ENCODE measurements at regions of chr1 and their contacts with region 1.

Region 1: DNA sequence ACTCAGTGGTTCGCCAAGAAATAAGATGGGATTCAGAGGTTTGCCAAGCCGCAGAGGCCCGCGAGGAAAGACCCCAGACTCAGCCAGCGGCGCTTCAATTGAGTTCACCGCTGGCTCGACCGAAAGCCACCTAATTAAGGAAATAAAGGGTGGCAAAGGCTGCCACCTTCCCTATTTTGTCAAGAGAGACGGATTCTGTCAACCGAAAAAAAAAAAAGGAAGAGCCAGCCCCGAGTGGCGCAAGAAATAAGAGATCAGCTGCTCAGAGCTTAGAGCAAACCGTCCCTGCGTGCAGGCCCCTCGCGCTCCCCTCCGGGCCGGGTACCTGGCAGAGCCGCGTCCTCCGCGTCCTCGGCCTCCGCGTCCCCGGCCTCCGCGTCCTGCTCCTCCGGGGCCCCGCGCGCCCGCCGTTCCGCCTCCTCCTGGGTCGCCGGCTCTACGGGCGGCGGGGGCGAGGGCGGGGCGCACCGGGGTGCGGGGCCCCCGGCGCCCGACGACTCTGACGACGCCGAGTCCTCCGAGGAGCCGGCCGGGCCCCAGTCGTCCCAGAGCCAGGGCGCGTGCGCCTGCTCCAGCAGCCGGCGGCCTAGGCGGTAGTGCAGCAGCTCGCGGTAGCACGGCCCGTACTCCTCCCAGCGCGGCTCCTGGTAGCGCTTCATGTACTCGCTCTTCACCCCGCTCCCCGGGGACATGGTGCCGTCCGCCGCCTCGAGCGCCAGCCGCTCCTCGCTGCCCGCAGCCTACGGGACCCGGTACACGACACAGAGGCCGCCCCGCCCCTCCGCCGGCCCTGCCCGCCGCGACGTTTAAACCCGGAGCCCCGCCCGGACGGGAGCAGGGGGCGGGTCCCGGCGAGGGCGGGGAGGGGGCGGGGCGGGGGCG is 832 bp downstream of the CCSAP start:
- DNase-seq: peak; percentile 82
- H3K4me3 Mint-ChIP-seq: peak overlapping the region; percentile 89
- H3K27ac Mint-ChIP-seq: peak overlapping the region; percentile 87
- H3K4me1 Mint-ChIP-seq: peaks cover 50% of the 10 kb centered on the region
- H3K27me3 Mint-ChIP-seq: peaks cover 21% of the 10 kb centered on the region

Region 2: DNA sequence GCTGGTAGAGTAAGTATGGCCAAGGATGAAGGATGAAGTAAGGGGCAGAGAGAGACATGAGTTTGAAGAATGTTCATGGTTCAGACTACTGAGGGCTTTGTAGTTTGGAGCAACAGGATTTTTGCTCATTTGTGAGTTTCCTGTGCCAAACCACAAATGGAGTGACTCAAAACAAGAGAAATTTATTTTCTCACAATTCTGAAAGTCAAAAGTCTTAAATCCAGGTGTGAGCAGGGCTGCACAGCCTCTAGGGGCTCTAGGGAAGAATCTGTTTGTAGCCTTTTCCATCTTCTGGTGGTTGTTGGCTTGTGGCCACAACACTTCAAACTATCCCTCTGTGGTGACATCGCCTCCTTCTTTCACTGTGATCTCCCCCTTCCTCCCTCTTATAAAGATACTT is 547.8 kb before region 1 on chr1:
- intact Hi-C with region 1: loop called (anchors 10 kb)
- DNase-seq: peak; percentile 49
- H3K4me3 Mint-ChIP-seq: no peak overlapping the region
- H3K27ac Mint-ChIP-seq: no peak overlapping the region
- H3K4me1 Mint-ChIP-seq: peaks cover 27% of the 10 kb centered on the region
- H3K27me3 Mint-ChIP-seq: no peaks in the 10 kb centered on the region

Region 3: GRCh38 chr1:229270547-229271447 is 71.2 kb before region 1 on chr1 and contains the start of gene RAB4A:
- intact Hi-C with region 1: loop called (anchors 1 kb)
- DNase-seq: peak; percentile 78
- H3K4me3 Mint-ChIP-seq: peak within 1 kb of the TSS; percentile 91
- H3K27ac Mint-ChIP-seq: peak within 1 kb of the TSS; percentile 82
- H3K4me1 Mint-ChIP-seq: peaks cover 19% of the 10 kb centered on the region
- H3K27me3 Mint-ChIP-seq: peaks cover 2% of the 10 kb centered on the region
- total RNA-seq, gene RAB4A: 29.0 and 29.3 TPM in 2 replicates

Region 4: GRCh38 chr1:229287267-229287666 is 54.7 kb before region 1 on chr1:
- intact Hi-C with region 1: loop called (anchors 2 kb)
- DNase-seq: no peak
- H3K4me3 Mint-ChIP-seq: no peak overlapping the region
- H3K27ac Mint-ChIP-seq: no peak overlapping the region
- H3K4me1 Mint-ChIP-seq: peaks cover 36% of the 10 kb centered on the region
- H3K27me3 Mint-ChIP-seq: no peaks in the 10 kb centered on the region

Region 5: DNA sequence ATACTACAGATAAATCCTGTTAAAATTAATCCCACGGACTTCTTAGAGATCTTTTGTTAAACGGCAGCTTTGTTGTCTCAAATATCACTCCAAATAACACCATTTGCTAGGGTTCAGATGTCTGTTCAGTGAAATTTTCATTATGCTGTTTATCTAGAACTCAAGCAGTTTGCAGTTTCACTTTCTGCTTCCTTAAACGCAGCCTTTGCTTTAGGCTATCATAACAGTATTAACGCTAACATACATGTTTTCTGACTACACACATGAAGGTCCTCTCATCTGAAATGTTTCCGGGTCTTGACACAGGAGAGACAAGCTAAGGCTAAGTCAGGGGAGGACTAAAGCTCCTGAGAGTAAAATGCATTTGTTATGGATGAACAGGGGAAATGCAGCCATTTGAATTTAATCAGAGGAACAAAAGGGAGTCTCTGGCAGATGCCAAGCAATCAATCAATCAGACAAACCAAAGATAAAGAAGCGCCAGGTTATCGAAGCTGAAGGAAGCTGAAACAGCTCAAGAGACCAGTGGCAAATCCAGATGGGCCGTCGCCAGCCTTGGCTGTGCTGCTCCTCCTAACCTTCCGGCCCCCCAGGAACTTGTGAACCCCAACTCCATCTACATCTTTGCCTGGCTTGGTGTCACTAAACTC is 16.0 kb before region 1 on chr1:
- intact Hi-C with region 1: loop called (anchors 2 kb)
- DNase-seq: no peak
- H3K4me3 Mint-ChIP-seq: peak overlapping the region; percentile 10
- H3K27ac Mint-ChIP-seq: peak overlapping the region; percentile 67
- H3K4me1 Mint-ChIP-seq: peaks cover 39% of the 10 kb centered on the region
- H3K27me3 Mint-ChIP-seq: no peaks in the 10 kb centered on the region

Region 6: DNA sequence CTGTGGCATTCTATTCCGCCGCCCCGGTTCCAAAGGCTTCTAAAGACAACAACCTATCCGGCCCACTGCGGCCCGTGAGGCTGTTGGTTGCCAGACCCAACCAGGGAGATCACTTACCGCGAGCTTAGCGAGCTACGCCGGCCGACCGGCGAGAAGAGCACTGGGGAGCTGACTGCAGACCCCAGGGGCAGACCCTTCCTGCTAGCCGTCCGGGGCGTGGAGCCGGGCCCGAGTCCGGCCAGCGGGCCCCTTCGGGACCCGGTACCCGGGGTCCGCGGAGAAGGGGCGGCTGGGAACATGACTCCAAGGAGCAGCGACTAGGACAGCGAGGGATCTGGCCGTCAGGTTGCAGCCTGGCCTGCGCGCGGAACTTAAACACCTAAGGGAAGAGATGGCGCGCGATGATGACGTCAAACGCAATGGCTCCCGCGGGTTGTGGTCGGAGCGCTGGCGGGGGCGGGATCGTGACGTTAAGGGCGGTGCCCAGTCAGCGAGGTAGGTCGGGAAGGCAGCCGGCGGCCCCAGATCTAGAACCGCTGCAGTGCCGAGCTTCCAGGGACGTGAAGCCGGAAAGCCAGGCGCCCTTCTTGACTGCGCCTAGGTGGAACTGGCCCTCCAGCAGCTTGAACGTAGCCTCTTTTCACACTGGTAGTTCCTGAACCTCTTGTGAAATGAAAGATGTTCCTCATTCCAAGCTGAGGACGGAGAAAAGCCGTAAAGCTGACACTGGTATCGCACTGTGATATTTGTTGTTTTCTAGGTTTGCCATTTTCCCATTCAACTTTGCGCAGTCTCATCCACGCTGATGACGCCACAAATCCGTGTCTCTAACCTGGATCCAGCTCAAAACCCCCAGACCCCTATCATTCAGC is 166.2 kb after region 1 on chr1 and contains the start of gene NUP133:
- intact Hi-C with region 1: loop called (anchors 1 kb)
- DNase-seq: peak; percentile 97
- H3K4me3 Mint-ChIP-seq: peak within 1 kb of the TSS; percentile 96
- H3K27ac Mint-ChIP-seq: peak within 1 kb of the TSS; percentile 97
- H3K4me1 Mint-ChIP-seq: peaks cover 25% of the 10 kb centered on the region
- H3K27me3 Mint-ChIP-seq: peaks cover 4% of the 10 kb centered on the region
- total RNA-seq, gene NUP133: 47.9 and 49.1 TPM in 2 replicates

Region 7: GRCh38 chr1:229558571-229559335 is 216.7 kb after region 1 on chr1 and contains the start of gene ABCB10:
- intact Hi-C with region 1: loop called (anchors 2 kb)
- DNase-seq: peak; percentile 81
- H3K4me3 Mint-ChIP-seq: peak within 1 kb of the TSS; percentile 90
- H3K27ac Mint-ChIP-seq: peak within 1 kb of the TSS; percentile 83
- H3K4me1 Mint-ChIP-seq: peaks cover 49% of the 10 kb centered on the region
- H3K27me3 Mint-ChIP-seq: no peaks in the 10 kb centered on the region
- total RNA-seq, gene ABCB10: 46.2 and 47.0 TPM in 2 replicates

Region 8: DNA sequence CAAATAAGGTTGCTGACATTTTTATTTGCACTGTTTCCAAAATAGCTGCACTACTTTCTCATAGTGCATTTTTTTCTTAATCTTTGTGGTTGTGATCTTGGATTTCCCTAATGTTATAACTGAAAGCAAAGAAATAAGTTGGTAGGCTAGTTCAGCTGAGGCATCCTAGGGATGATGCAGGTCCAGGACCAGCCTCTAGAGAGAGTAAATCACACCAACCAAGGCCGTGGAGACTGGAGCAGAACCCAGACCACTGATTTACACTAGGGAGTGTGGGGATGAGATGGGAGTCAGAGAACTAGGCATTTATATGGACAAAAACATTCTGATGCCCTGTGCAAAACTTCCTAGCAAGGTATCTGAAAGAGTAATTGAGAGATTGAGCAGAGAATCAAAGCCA is 388.6 kb after region 1 on chr1:
- intact Hi-C with region 1: no loop called
- DNase-seq: no peak
- H3K4me3 Mint-ChIP-seq: no peak overlapping the region
- H3K27ac Mint-ChIP-seq: no peak overlapping the region
- H3K4me1 Mint-ChIP-seq: no peaks in the 10 kb centered on the region
- H3K27me3 Mint-ChIP-seq: peaks cover 12% of the 10 kb centered on the region